SK-N-SH (cell line): ENCODE measurements at regions of chr2 and their contacts with region 1.

Region 1: GRCh38 chr2:75064691-75065396 is 106.4 kb downstream of the POLE4 start:
- DNase-seq: peak; percentile 63
- H3K4me3 ChIP-seq: no peak overlapping the region; a peak in 1 of 4 replicates
- H3K27ac ChIP-seq: no peak overlapping the region
- H3K4me1 ChIP-seq: no peaks in the 10 kb centered on the region
- H3K27me3 ChIP-seq: no peaks in the 10 kb centered on the region; the same call in 1 of the 2 replicates
- CTCF ChIP-seq: peak; percentile 81
- EP300 ChIP-seq: no peak
- RAD21 ChIP-seq: peak; percentile 68

Region 2: DNA sequence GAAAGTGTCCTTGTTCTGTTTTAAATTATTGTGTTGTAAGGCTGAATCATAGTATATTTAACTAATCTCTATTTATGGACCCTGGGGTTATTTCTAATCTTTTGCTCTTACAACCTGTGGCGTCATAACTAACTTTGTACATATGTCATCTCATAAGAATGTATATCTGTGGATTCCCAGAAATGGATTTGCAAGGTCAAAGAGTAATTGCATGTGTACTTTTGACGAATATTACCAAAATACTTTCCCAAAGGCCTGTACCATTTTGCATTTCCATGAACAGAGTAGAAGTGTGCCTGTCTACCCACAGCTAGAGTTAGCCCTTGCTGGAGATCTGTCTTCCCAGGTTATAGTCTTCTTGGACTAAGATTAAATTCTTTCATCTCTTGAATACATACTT is 368.0 kb before region 1 on chr2:
- CTCF ChIA-PET with region 1: no interaction called
- POLR2A ChIA-PET with region 1: no interaction called
- DNase-seq: no peak
- H3K4me3 ChIP-seq: no peak overlapping the region
- H3K27ac ChIP-seq: no peak overlapping the region
- H3K4me1 ChIP-seq: no peaks in the 10 kb centered on the region; a peak in 1 of 4 replicates
- H3K27me3 ChIP-seq: no peaks in the 10 kb centered on the region
- CTCF ChIP-seq: no peak
- EP300 ChIP-seq: no peak
- RAD21 ChIP-seq: no peak

Region 3: GRCh38 chr2:75053484-75054112 is 11.2 kb before region 1 on chr2:
- CTCF ChIA-PET with region 1: interaction called, 17 read pairs
- POLR2A ChIA-PET with region 1: no interaction called
- DNase-seq: peak; percentile 58
- H3K4me3 ChIP-seq: no peak overlapping the region; a peak in 1 of 4 replicates
- H3K27ac ChIP-seq: no peak overlapping the region
- H3K4me1 ChIP-seq: peaks cover 0 to 5% of the 10 kb centered on the region in 2 experiments; a peak in 1 of 4 replicates
- H3K27me3 ChIP-seq: no peaks in the 10 kb centered on the region
- CTCF ChIP-seq: peak; percentile 64
- EP300 ChIP-seq: no peak
- RAD21 ChIP-seq: peak; percentile 63

Region 4: DNA sequence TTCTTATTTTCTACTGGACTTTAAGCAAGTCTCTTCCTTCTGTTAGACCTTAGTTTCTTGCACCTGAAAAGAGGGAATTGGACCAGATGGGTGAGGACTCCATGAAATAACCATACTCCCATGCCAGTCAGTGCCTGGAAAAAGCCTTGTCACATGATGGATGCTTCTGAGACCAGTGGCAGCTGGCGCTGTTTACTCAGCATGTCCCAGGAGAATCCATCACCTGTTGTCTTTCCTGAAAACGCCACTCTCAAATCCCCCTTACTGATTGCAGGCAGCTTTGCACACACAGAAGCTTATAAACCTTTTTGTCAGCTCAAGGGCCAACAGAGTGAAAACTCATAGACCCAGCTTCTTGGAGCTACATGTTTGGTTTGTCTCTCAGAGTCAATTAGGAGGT is 11.2 kb after region 1 on chr2:
- CTCF ChIA-PET with region 1: interaction called, 33 read pairs
- POLR2A ChIA-PET with region 1: no interaction called
- DNase-seq: no peak
- H3K4me3 ChIP-seq: no peak overlapping the region
- H3K27ac ChIP-seq: no peak overlapping the region
- H3K4me1 ChIP-seq: peaks cover 0 to 8% of the 10 kb centered on the region in 2 experiments; a peak in 1 of 4 replicates
- H3K27me3 ChIP-seq: no peaks in the 10 kb centered on the region; the same call in 1 of the 2 replicates
- CTCF ChIP-seq: no peak
- EP300 ChIP-seq: no peak
- RAD21 ChIP-seq: no peak

Region 5: DNA sequence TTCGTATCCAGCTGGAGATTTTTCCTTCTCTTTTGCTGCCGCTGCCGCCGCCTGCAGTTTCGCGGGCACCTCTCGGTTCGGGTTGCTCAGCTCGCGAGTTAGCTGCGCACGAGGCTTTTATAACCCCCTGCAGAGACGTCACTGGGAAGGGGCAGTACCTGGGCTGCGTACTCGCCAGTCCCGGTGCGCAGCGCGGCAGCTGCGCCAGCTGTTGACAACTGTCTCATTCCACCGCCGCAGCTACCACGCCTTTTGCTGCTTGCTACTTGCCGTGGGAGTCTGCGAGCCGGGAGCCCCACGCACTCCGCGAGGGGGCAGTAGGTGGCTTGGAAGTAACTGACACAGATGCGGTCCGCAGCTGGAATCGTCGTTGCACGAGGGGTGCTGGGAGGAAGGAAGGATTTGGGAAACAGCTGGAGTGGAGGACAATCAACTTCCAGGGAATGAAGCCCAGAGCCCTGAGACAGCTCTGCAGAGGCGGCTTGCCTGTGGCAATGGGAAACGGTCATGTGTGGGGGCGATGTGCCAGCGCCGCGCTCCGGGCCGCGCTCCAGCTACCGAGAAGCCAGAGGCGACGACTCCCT is 134.7 kb after region 1 on chr2 and contains the start of gene TACR1:
- CTCF ChIA-PET with region 1: interaction called, 11 read pairs
- POLR2A ChIA-PET with region 1: no interaction called
- DNase-seq: peak; percentile 78
- H3K4me3 ChIP-seq: peak within 1 kb of the TSS; percentile 34 to 53
- H3K27ac ChIP-seq: no peak within 1 kb of the TSS
- H3K4me1 ChIP-seq: peaks cover 0 to 20% of the 10 kb centered on the region in 2 experiments; a peak in 1 of 4 replicates
- H3K27me3 ChIP-seq: peaks cover 60% of the 10 kb centered on the region
- CTCF ChIP-seq: peak; percentile 67
- EP300 ChIP-seq: no peak
- RAD21 ChIP-seq: peak; percentile 54
- polyA plus RNA-seq, gene TACR1: under 0.01 TPM in 1 of 2 replicates, not detected in the other